ENCODE measurements at regions of chr1 and their contacts with region 1.

Region 1: DNA sequence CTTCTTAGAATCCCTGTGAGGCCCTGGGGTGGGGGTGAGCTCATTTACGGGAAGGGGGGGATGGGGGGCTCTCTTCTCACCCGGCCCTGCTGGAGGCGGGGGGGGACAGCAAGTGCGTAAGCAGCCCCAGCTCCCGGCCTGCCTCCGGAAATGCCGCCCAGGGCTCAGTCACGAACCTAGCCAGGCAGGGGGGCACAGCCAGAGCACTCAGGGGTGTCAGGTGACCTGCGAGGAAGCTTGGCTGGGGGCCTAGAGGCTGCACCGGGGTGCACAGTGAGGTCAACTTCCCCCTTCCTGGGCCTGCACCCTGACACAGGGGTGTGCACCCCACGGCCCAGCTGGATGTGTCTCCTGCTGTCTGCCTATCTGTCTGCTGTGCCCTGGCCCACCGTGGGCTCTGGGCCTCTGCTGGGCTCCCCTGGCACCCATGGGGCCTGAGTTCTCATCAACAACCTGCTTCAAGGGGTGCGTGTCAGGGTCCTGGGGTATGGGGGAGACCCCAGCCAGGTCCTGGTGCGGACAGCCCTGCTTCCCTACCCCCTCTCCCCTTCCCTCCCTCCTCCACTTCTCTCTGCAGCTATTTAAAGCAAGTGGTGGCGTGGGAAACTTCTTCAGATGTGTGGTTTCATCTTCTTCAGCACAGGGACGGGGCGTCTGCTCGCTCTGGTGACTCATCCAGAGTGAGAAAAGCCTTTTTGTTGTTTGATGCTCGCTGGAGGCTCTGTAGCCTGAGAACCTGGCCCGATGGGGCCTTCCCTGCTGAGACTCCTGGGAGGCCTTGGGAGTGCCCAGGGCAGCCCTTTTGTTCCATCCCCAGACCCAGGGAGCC is 92.5 kb upstream of the RUNX3 start:
- DNase-seq: peak; percentile 98
- H3K4me3 Mint-ChIP-seq: peak overlapping the region; percentile 71
- H3K27ac Mint-ChIP-seq: peak overlapping the region; percentile 96
- H3K4me1 Mint-ChIP-seq: peaks cover 86% of the 10 kb centered on the region
- H3K27me3 Mint-ChIP-seq: no peaks in the 10 kb centered on the region

Region 2: DNA sequence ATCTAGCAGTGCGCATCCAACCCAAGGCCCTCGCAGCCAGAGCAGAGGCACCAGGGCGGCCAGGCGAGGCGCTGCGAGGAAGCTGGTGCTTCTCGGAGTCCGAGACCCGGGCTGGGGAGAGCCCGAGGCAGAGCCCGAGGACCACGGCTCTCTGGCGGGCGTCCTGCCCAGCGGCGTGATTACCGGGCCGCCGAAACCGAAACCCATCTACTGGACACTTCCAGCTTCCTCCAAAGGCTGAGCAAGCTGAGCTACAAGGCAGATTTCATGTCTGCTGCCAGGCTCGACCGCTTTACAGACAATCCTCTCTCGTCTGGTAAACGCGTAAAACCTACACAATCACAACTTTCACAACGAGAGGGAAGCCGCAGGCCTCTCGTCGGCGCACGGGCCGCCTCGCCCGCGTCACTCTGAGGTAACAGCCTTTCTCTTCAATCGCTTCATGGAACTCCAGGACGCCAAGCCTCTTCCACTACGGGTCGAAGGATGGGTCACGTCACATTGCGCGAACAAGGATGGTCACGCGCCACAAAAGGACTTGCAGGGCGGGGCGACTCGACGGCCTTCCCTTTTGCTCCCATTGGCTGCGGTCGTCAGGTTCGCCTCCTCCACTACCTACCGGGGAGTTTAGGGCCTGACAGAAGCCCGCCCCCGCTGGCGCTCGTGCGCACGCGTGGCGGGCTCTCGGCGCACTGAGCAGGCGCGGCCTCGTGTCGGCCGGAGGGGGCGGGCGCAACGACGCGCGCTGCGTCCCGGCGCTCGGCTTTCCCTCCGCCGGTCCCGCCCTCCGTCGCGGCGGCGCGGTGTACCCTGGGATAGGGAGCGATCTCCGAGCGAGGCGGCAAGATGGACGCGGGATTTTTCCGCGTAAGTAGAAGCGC is 379.9 kb before region 1 on chr1 and contains the start of gene SRRM1:
- CTCF ChIA-PET with region 1: no interaction called
- intact Hi-C with region 1: loop called (anchors 2 kb)
- DNase-seq: peak; percentile 100
- H3K4me3 Mint-ChIP-seq: peak within 1 kb of the TSS; percentile 83
- H3K27ac Mint-ChIP-seq: peak within 1 kb of the TSS; percentile 98
- H3K4me1 Mint-ChIP-seq: peaks cover 48% of the 10 kb centered on the region
- H3K27me3 Mint-ChIP-seq: no peaks in the 10 kb centered on the region
- total RNA-seq, gene SRRM1: 226 to 235 TPM

Region 3: DNA sequence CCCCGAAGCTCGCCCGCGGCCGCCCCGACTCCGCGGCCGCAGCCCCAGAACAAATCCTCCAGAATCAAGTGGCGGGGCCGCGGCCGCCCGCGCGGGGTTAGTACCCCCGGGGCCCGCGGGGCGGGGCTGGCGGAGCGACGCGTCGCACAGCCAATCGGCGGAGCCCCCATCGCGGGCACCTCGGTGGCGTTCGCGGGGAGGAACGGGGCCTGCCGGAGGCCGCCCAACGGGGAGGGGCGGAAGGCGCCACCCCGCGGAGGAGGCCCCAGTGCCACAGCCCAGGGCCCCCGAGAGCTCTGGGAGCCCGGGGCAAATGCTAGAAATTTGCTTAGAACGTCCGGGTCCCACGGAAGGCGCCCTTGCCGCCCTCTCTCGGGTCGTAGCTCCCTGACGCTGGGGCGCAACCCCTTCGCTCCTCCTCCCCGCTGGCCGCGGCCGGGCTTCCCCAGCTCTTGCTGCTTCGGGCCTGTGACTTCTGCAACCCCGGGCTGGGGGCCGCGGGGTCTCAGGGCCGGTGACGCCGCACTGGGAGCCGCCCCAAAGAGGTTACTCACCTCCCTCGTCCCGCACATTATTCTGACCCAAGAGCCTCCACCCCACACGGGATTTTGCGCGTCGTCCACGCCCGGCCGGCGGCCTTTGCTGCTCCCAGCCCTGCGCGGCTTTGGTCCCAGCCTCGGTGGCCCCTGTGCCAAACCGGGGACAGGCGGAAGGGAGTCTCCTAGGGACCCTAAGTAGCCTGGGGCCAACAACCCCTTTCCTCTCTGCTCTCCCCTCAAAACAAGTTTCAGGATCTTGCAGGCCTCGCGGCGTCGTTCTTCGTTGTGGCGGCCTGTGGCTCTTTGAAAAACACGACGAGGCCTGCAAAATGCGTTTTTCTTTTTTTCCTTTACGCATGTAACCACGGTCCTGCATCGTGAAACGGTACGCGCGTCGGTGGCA is 92.1 kb before region 1 on chr1 and contains the start of gene RUNX3:
- CTCF ChIA-PET with region 1: interaction called, 5 read pairs
- intact Hi-C with region 1: loop called (anchors 1 kb)
- DNase-seq: peak; percentile 93
- H3K4me3 Mint-ChIP-seq: peak within 1 kb of the TSS; percentile 94
- H3K27ac Mint-ChIP-seq: peak within 1 kb of the TSS; percentile 92
- H3K4me1 Mint-ChIP-seq: peaks cover 66% of the 10 kb centered on the region
- H3K27me3 Mint-ChIP-seq: no peaks in the 10 kb centered on the region
- total RNA-seq, gene RUNX3: 72.3 to 83.8 TPM

Region 4: GRCh38 chr1:24964811-24965570 is 57.6 kb before region 1 on chr1:
- CTCF ChIA-PET with region 1: interaction called, 7 read pairs
- intact Hi-C with region 1: loop called (anchors 1 kb)
- DNase-seq: peak; percentile 97
- H3K4me3 Mint-ChIP-seq: peak overlapping the region; percentile 92
- H3K27ac Mint-ChIP-seq: peak overlapping the region; percentile 98
- H3K4me1 Mint-ChIP-seq: peaks cover 82% of the 10 kb centered on the region
- H3K27me3 Mint-ChIP-seq: no peaks in the 10 kb centered on the region

Region 5: GRCh38 chr1:24987875-24988557 is 34.6 kb before region 1 on chr1:
- CTCF ChIA-PET with region 1: interaction called, 11 read pairs
- intact Hi-C with region 1: loop called (anchors 1 kb)
- DNase-seq: peak; percentile 73
- H3K4me3 Mint-ChIP-seq: no peak overlapping the region
- H3K27ac Mint-ChIP-seq: peak overlapping the region; percentile 84
- H3K4me1 Mint-ChIP-seq: peaks cover 95% of the 10 kb centered on the region
- H3K27me3 Mint-ChIP-seq: no peaks in the 10 kb centered on the region

Region 6: GRCh38 chr1:25003457-25004190 is 19.0 kb before region 1 on chr1:
- CTCF ChIA-PET with region 1: no interaction called
- intact Hi-C with region 1: loop called (anchors 2 kb)
- DNase-seq: peak; percentile 66
- H3K4me3 Mint-ChIP-seq: no peak overlapping the region
- H3K27ac Mint-ChIP-seq: peak overlapping the region; percentile 67
- H3K4me1 Mint-ChIP-seq: peaks cover 51% of the 10 kb centered on the region
- H3K27me3 Mint-ChIP-seq: no peaks in the 10 kb centered on the region

Measured in activated naive CD4-positive, alpha-beta T cell treated with anti-CD3 and anti-CD28 coated beads for 36 hours (primary cell).